PC-3 (cell line): ENCODE measurements at regions of chr21 and their contacts with region 1.

Region 1: DNA sequence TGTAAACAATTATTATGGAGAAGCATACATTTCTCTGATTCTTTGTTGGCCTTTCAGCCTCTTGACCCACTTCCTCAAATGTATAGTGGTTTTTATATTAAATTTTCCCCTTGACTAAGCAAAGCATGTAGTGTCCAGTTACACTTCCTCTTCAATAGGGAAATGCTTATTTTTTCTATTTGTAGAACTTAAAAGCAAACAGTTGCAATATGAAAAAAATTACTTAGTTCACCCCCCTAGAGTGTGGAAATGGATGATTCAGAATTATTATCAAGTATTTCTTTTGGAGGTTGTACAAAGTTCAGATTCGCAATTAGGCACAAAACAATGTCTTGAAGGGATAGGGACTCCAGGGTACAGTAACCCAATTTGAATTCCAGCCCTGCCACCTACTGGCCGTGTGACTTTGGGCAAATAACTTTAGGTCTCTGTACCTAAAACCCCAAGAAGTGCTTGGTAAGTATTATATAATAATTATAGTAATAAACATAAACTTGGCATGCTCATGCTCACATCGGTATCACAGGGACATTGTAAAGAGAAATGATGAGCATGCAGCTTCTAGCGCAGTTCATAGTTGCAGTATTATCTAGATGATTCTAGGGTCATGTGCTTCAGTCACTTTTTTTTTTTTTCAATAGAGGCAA is 28.6 kb upstream of the IFNGR2 start:
- DNase-seq: peak; percentile 90
- ATAC-seq: peak; percentile 87
- H3K4me3 ChIP-seq: peak overlapping the region; percentile 31; the same call in 1 of the 2 replicates
- H3K27ac ChIP-seq: peak overlapping the region; percentile 93
- H3K4me1 ChIP-seq: peaks cover 28% of the 10 kb centered on the region
- H3K27me3 ChIP-seq: no peaks in the 10 kb centered on the region
- CTCF ChIP-seq: peak; percentile 85

Region 2: GRCh38 chr21:33324291-33325221 is 50.0 kb before region 1 on chr21 and contains the start of gene IFNAR1:
- CTCF ChIA-PET with region 1: no interaction called
- POLR2A ChIA-PET with region 1: no interaction called
- intact Hi-C with region 1: loop called (anchors 2 kb)
- DNase-seq: peak; percentile 94
- ATAC-seq: peak; percentile 90
- H3K4me3 ChIP-seq: peak within 1 kb of the TSS; percentile 93
- H3K27ac ChIP-seq: peak within 1 kb of the TSS; percentile 74
- H3K4me1 ChIP-seq: peaks cover 7% of the 10 kb centered on the region; the same call in 1 of the 2 replicates
- H3K27me3 ChIP-seq: no peaks in the 10 kb centered on the region
- CTCF ChIP-seq: no peak
- total RNA-seq, gene IFNAR1: 13.2 and 18.4 TPM in 2 replicates

Region 3: DNA sequence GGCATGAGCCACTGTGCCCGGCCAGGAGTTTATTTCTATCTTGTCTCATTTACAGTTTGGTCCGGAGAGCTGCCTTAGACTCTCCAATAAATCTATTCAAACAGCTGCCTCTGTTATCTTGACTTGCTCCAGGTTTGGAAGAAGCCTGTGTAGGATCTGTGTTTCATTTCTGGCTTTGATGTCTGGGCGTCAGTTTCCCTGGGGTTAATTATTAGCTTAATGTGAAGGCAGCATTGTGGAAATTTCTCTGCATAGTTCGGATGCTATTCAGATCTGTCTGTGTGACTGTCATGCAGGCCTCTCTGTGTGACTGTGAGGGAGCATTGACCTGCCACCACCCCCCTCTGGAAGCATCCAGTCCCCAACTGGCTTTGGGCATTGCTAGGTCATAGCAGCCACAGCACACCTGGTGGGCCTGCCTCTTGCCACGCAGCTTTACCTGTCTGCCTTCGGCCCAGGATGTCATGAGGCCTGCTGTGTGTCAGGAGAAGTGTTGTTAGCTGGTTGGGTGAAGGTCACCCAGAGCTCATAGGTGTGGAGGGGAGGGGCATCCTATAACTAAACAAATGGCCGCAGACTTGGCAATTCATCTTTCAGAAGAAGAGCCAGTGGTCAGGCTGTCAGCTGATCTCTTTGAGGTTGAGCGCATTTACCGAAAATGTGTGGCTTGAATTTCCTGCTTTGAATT is 38.4 kb after region 1 on chr21:
- CTCF ChIA-PET with region 1: no interaction called
- POLR2A ChIA-PET with region 1: no interaction called
- intact Hi-C with region 1: loop called (anchors 1 kb)
- DNase-seq: no peak
- ATAC-seq: no peak
- H3K4me3 ChIP-seq: no peak overlapping the region
- H3K27ac ChIP-seq: no peak overlapping the region
- H3K4me1 ChIP-seq: peaks cover 20% of the 10 kb centered on the region
- H3K27me3 ChIP-seq: no peaks in the 10 kb centered on the region
- CTCF ChIP-seq: no peak

Region 4: GRCh38 chr21:33428669-33429068 is 54.1 kb after region 1 on chr21:
- CTCF ChIA-PET with region 1: interaction called, 11 read pairs
- POLR2A ChIA-PET with region 1: no interaction called
- intact Hi-C with region 1: loop called (anchors 2 kb)
- DNase-seq: peak; percentile 95
- ATAC-seq: peak; percentile 78
- H3K4me3 ChIP-seq: peak overlapping the region; percentile 9; the same call in 1 of the 2 replicates
- H3K27ac ChIP-seq: peak overlapping the region; percentile 99
- H3K4me1 ChIP-seq: peaks cover 33% of the 10 kb centered on the region
- H3K27me3 ChIP-seq: no peaks in the 10 kb centered on the region
- CTCF ChIP-seq: no peak

Region 5: DNA sequence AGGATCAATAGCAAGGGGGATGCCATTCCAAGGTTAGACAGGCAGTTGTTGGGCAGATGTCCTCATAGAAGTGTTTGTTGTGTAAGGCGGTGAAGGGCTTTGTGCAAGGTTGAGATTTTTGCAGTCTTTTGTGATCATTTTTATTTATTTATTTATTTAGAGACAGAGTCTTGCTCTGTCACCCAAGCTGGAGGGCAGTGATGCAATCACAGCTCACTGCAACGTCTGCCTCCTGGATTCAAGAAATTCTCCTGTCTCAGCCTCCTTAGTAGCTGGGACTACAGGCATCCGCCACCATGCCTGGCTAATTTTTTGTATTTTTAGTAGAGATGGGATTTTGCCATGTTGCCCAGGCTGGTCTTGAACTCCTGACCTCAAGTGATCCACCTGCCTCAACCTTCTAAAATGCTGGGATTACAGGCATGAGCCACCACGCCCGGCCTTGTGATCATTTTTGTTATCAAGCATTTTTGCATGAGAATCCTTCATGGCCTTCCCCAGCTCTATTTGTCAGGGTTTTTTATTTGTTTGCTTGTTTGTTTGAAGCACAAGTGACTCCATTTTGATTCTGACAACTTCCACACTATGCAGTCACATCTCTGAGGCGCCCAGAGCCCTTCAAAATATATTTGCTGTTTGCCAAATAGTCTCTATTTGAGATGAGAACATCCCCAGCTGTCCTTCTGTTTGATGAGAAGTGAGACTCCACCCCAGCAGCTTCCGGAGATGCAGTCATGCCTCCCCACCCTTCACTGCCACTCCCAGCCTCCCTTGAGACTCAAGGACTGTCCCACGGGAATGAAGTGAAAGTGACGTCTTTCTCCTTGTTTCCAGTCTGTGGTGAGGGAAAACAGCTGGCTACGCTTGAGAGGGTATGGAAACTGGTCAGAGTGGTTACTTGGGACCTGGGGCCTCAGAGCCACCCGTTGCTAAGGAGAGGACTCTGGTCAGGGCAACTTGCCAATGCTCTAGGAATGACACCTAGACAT is 67.2 kb after region 1 on chr21:
- CTCF ChIA-PET with region 1: no interaction called
- POLR2A ChIA-PET with region 1: no interaction called
- intact Hi-C with region 1: loop called (anchors 2 kb)
- DNase-seq: peak; percentile 91
- ATAC-seq: peak; percentile 92
- H3K4me3 ChIP-seq: no peak overlapping the region
- H3K27ac ChIP-seq: peak overlapping the region; percentile 93
- H3K4me1 ChIP-seq: peaks cover 21% of the 10 kb centered on the region
- H3K27me3 ChIP-seq: no peaks in the 10 kb centered on the region
- CTCF ChIP-seq: no peak